WTC11 (cell line): ENCODE measurements at regions of chr19 and their contacts with region 1.

Region 1: DNA sequence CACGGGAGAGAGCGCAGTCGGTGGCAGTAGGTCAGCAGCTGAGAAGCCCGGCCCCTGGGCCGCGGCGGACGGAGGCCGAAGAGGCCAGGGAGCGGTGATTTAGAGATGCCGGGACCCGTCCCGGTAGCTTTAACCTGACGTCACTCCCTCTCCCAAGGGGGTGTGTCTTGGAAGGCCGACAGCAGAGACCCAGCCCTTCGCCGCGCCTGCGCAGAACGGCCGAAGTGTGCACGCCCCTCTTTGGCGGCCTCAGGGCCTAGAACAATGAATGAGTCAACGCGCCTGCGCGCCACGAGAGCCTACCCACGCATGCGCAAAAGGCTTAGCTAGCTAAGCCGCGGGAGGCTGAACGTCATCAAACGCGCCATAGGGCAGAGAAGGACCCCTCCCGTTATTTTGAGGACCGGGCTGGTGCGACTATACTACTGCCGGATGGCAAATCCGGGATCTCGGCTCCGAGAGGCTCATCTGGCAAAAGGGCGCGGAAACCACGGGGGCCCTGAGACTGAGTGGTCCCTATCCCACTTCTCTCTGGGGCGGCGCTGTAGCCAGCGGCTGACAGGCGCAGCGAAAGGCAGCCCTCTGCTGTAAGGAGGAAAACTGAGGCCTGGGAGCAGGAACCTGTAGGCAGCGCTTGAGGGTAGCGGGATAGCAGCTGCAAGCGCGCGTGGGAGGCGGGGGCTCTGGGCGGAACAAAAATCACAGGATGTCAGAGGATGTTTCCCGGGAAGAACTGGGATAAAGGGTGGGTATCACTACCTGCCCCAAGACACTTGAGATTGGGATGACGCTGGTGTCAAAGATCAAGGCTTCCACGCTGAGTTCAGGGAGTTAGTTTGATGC is at the starts of genes IRGQ and ZNF576:
- DNase-seq: peak; percentile 100
- ATAC-seq: peak; percentile 88
- H3K4me3 Mint-ChIP-seq: peak within 1 kb of the TSS; percentile 99
- H3K27ac Mint-ChIP-seq: peak within 1 kb of the TSS; percentile 99
- H3K4me1 Mint-ChIP-seq: peaks cover 17% of the 10 kb centered on the region
- H3K27me3 Mint-ChIP-seq: no peaks in the 10 kb centered on the region
- CTCF ChIP-seq: no peak
- total RNA-seq, gene IRGQ: 33.6 to 38.1 TPM (median 35.5 TPM) in 3 replicates
- total RNA-seq, gene ZNF576: 15.9 to 18.5 TPM (median 16.5 TPM) in 3 replicates

Region 2: DNA sequence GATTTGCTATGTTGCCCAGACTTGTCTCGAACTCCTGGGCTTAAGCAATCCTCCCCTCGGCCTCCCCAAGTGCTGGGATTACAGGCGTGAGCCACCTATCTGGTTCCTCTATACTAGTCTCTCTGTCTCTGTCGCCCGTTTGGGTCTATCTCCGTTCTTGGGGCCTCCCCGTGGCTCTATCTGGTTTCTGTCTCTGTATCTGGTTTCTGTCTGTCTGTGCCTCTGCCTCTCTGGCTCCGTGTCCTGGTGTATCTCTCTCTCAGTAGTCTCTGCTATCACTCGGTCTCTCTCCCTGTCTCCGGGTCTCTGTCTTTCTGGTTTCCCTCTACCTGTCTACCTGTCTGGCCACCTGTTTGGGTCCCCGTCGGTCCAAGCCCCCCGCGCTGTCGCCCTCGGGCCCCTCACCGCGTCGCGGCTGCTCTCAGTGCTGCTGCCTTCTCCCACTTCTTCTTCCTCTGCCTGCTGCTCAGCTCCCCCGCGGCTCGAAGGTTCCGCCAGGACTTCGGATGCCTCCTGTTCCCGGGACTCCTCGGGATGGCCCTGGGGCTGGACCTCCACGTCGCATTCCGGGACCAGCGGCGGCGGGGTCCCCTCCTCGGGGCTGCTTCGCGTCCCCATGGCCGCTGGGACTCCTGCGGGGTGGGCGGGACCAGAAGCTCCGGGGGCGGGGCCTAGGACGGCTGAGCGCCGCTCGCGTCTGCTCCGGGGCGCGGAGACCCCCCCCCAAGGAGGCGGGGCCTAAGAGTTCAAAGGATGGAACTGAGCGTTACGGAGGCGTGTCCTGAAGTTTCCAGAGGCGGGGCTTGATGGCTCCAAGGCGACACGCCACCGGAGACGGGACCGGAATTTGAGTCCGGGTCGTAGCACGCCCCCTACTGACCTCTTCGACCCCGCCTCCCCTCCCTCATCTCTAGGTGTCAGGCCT is 92.5 kb before region 1 on chr19:
- CTCF ChIA-PET with region 1: interaction called, 17 read pairs
- POLR2A ChIA-PET with region 1: interaction called, 5 read pairs
- DNase-seq: peak; percentile 97
- ATAC-seq: peak; percentile 89
- H3K4me3 Mint-ChIP-seq: peak overlapping the region; percentile 91
- H3K27ac Mint-ChIP-seq: peak overlapping the region; percentile 74
- H3K4me1 Mint-ChIP-seq: peaks cover 21% of the 10 kb centered on the region
- H3K27me3 Mint-ChIP-seq: peaks cover 38% of the 10 kb centered on the region
- CTCF ChIP-seq: peak; percentile 25; the same call in 1 of the 2 replicates

Region 3: GRCh38 chr19:43532962-43533545 is 63.2 kb before region 1 on chr19 and contains the start of gene ZNF575:
- CTCF ChIA-PET with region 1: interaction called, 140 read pairs
- POLR2A ChIA-PET with region 1: interaction called, 5 read pairs
- DNase-seq: peak; percentile 96
- ATAC-seq: peak; percentile 68
- H3K4me3 Mint-ChIP-seq: peak within 1 kb of the TSS; percentile 95
- H3K27ac Mint-ChIP-seq: peak within 1 kb of the TSS; percentile 100
- H3K4me1 Mint-ChIP-seq: peaks cover 18% of the 10 kb centered on the region
- H3K27me3 Mint-ChIP-seq: peaks cover 25% of the 10 kb centered on the region
- CTCF ChIP-seq: peak; percentile 16; the same call in 1 of the 2 replicates
- total RNA-seq, gene ZNF575: 0.13 to 0.25 TPM in 2 of 3 replicates, not detected in the other

Region 4: GRCh38 chr19:43575156-43575950 is 20.9 kb before region 1 on chr19 and contains the starts of genes PINLYP and XRCC1:
- CTCF ChIA-PET with region 1: interaction called, 53 read pairs
- POLR2A ChIA-PET with region 1: interaction called, 5 read pairs
- DNase-seq: peak; percentile 97
- ATAC-seq: peak; percentile 96
- H3K4me3 Mint-ChIP-seq: peak within 1 kb of the TSS; percentile 96
- H3K27ac Mint-ChIP-seq: peak within 1 kb of the TSS; percentile 91
- H3K4me1 Mint-ChIP-seq: peaks cover 33% of the 10 kb centered on the region
- H3K27me3 Mint-ChIP-seq: no peaks in the 10 kb centered on the region; the same call in none of the 2 replicates
- CTCF ChIP-seq: no peak
- total RNA-seq, gene PINLYP: 6.4 to 11.3 TPM (median 10.6 TPM) in 3 replicates
- total RNA-seq, gene XRCC1: 46.5 to 50.8 TPM (median 48.3 TPM) in 3 replicates

Region 5: DNA sequence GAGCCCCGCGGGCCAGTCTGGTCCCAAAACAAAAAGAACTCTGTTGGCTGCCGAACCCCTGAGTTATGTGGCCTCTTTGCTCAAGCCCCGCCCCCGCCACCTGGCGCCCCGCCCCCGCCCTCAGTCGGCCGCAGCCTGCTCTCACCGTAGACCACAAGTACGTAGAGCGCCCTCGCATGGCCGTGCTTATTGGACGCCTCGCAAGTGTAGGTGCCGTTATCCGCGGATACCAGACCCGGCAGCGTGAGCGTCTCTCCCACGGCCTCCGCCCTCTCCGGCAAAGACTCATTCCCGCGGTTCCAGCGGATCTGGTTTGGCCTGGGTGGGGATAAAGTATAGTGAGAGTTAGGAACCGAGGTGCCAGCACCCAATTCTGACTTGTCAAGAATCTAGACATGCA is 28.7 kb after region 1 on chr19:
- CTCF ChIA-PET with region 1: interaction called, 10 read pairs
- POLR2A ChIA-PET with region 1: interaction called, 3 read pairs
- DNase-seq: peak; percentile 98
- ATAC-seq: peak; percentile 82
- H3K4me3 Mint-ChIP-seq: peak overlapping the region; percentile 47
- H3K27ac Mint-ChIP-seq: peak overlapping the region; percentile 97
- H3K4me1 Mint-ChIP-seq: peaks cover 26% of the 10 kb centered on the region
- H3K27me3 Mint-ChIP-seq: peaks cover 34% of the 10 kb centered on the region
- CTCF ChIP-seq: no peak

Region 6: DNA sequence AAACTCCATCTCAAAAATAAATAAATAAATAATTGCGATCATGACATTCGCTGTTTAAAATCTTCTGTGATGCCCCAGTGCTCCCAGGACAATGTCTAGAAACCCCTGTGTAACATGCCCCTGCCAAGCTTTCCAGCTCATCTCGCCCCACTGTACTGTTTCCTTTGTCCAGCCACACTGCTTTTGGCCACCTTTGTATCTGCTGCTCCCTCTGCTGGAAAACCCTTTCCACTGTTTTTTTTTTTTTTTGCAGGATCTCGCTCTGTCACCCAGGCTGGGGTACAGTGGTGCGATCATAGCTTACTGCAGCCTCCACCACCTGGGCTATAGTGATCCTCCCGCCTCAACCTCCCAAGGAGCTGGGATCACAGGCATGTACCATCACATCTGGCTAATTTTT is 66.3 kb after region 1 on chr19:
- CTCF ChIA-PET with region 1: interaction called, 30 read pairs
- POLR2A ChIA-PET with region 1: no interaction called
- DNase-seq: no peak
- ATAC-seq: peak; percentile 79
- H3K4me3 Mint-ChIP-seq: no peak overlapping the region
- H3K27ac Mint-ChIP-seq: no peak overlapping the region; the same call in 1 of the 2 replicates
- H3K4me1 Mint-ChIP-seq: peaks cover 6% of the 10 kb centered on the region
- H3K27me3 Mint-ChIP-seq: peaks cover 8% of the 10 kb centered on the region
- CTCF ChIP-seq: peak; percentile 19; the same call in 1 of the 2 replicates

Region 7: DNA sequence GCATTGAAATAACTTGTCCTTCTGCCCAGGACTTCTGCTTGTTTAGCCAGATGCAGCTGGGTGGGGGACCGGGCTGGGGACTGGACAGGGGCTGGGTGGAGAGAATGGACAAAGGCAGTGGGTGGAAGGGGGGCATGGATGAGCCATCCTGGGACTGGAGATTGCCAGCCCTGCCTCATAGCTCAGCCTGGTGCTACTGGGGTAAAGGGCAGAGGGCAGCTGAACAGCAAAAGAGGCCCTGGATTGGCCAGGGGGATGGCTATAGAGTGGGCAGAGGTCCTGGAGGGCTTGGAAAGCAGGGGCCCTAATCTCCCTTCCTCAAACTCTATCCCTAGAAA is 91.4 kb after region 1 on chr19:
- CTCF ChIA-PET with region 1: no interaction called
- POLR2A ChIA-PET with region 1: no interaction called
- DNase-seq: no peak
- ATAC-seq: no peak
- H3K4me3 Mint-ChIP-seq: no peak overlapping the region
- H3K27ac Mint-ChIP-seq: no peak overlapping the region
- H3K4me1 Mint-ChIP-seq: peaks cover 10% of the 10 kb centered on the region; the same call in 1 of the 2 replicates
- H3K27me3 Mint-ChIP-seq: peaks cover 5% of the 10 kb centered on the region; the same call in 1 of the 2 replicates
- CTCF ChIP-seq: no peak